Naive thymus-derived CD4-positive, alpha-beta T cell (primary cell): ENCODE measurements at regions of chr3 and their contacts with region 1.

Region 1: DNA sequence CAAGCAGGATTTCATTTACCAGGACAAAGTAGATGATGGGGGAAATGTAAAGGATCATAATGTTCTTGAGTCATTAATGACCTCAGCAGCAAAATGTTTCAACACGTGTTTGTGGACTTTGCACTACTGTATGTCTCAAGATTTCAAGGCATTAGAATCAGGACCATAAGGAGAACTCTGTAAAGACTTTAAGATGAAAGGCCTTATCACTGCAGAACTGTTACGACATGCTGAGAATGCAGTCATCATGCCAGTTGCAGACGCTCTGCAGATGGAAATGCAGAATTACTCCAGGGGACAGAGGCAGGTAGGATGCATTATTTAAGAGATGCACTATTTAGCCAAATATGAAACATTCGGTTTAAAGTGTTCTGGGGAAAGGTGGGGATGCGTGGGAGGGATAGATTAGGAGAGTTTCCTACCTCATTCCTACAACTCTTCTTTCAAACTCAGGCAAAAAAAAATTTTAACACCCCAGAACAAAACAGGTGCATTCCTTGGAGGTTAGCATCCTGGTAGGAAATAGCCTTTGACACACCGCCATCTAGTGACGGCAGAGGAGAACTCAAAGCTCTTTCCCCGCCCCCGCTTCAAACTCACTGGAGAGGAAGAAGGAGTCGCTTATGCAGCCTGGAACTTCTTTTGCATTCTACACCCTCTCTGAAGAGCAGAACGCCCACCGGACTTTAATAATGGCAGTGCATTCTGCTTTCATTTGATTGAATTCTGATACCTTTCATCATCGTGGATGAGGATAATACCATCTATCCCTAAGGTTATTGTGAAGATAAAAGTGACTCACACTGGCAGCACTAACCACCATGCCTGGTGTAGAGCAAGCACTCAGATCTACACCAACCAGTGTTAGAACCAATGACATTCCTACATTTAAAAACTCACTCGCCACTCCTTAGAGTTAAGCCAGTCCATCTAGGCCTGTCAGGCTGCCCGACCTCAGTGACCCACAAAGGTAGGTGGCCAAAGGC is 43.1 kb upstream of the TOPAZ1 start:
- DNase-seq: peak; percentile 23 to 68 (median 62)
- ATAC-seq: peak; percentile 83
- H3K4me3 ChIP-seq: no peak overlapping the region
- H3K4me3 Mint-ChIP-seq: no peak overlapping the region
- H3K27ac ChIP-seq: no peak overlapping the region
- H3K27ac Mint-ChIP-seq: no peak overlapping the region
- H3K4me1 ChIP-seq: no peaks in the 10 kb centered on the region
- H3K4me1 Mint-ChIP-seq: no peaks in the 10 kb centered on the region
- H3K27me3 ChIP-seq: no peaks in the 10 kb centered on the region
- H3K27me3 Mint-ChIP-seq: peaks cover 16 to 25% (median 18%) of the 10 kb centered on the region in 5 donors

Region 2: DNA sequence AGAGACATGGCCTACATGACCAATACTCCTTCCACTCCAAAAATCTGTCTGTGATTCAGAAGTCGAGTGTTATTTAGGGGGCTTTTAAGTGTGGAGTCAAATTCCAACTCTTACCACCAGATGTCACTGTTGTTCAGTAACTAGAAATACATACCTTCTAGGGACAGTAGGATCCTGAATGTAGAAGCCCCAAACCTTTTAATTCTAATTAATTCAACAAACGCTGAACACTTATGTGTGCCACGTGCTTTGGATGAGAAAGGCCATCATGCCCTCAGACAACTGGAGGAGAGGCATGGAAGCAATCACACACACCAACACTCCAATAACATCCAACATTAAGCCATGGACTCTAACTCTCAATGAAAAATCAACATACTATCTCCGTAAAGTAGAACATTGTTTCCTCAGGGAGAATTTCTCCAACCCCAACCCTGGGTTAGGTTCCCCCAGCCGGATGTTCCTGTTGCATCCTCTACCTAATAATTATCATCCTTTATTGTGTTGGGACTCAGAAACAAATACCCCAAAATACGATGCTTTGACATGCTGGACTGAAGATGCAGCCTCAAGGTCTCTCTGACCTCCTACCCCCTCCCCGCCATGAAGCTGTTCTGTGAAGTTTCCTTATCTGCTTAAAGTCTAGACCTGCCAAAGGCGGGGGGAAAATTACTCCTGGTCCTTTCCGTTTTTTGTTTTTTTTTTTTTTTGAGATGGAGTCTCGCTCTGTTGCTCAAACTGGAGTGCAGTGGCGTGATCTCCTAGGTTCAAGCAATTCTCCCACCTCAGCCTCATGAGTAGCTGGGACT is 1417.5 kb before region 1 on chr3:
- CTCF ChIA-PET with region 1: no interaction called
- POLR2A ChIA-PET with region 1: no interaction called
- intact Hi-C with region 1: loop called in 1 of 2 experiments (anchors 2 kb)
- DNase-seq: peak in 7 of 9 donors; percentile 41 to 67 (median 54)
- ATAC-seq: peak; percentile 87
- H3K4me3 ChIP-seq: no peak overlapping the region
- H3K4me3 Mint-ChIP-seq: no peak overlapping the region
- H3K27ac ChIP-seq: no peak overlapping the region
- H3K27ac Mint-ChIP-seq: peak overlapping the region in 2 of 9 donors; percentile 14
- H3K4me1 ChIP-seq: no peaks in the 10 kb centered on the region
- H3K4me1 Mint-ChIP-seq: peaks cover 0 to 5% (median 0%) of the 10 kb centered on the region in 7 donors
- H3K27me3 ChIP-seq: no peaks in the 10 kb centered on the region
- H3K27me3 Mint-ChIP-seq: no peaks in the 10 kb centered on the region

Region 3: DNA sequence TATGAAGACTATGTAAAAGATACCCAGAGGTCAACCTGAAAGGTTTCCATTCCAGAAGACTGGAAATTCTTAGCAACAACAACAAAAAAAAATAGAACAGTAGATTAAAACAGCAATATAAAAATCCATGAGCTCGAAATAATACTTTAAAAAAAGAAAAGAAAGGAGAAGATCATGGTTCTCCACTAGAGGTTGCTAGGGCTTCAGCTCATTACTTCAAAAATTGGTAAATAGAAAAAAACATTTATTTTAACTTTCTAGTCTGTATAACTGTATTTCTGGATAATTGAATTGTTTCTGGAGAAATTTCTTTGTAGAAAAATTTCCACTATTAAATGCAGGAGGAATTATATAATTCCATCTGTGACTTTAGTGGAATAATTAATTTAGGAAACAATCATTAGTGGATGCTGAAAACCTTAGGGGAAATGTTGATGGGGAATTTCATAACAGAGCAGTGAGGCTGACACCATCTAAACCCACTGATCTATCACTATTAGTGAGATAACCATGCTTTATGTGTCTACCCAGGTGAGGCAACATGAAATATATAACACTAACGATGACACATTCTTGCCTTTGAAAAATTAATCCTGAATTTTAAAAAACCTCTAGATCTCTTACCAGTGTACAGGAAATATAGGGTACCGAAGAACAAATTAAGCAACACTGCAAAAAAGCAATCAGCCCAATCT is 974.8 kb before region 1 on chr3:
- CTCF ChIA-PET with region 1: no interaction called
- POLR2A ChIA-PET with region 1: no interaction called
- intact Hi-C with region 1: loop called in 1 of 2 experiments (anchors 5 kb)
- DNase-seq: peak in 4 of 9 donors; percentile 18 to 46 (median 38)
- ATAC-seq: peak; percentile 57
- H3K4me3 ChIP-seq: no peak overlapping the region
- H3K4me3 Mint-ChIP-seq: peak overlapping the region in 6 of 10 donors; percentile 20 to 77 (median 47)
- H3K27ac ChIP-seq: no peak overlapping the region
- H3K27ac Mint-ChIP-seq: peak overlapping the region in 7 of 9 donors; percentile 18 to 93 (median 87)
- H3K4me1 ChIP-seq: peaks cover 13 to 56% of the 10 kb centered on the region in 2 donors
- H3K4me1 Mint-ChIP-seq: peaks cover 25 to 67% (median 63%) of the 10 kb centered on the region in 7 donors
- H3K27me3 ChIP-seq: no peaks in the 10 kb centered on the region
- H3K27me3 Mint-ChIP-seq: no peaks in the 10 kb centered on the region

Region 4: GRCh38 chr3:43769471-43770425 is 428.8 kb before region 1 on chr3:
- CTCF ChIA-PET with region 1: interaction called, 3 read pairs
- POLR2A ChIA-PET with region 1: no interaction called
- intact Hi-C with region 1: loop called (anchors 1 kb)
- DNase-seq: peak; percentile 48 to 76 (median 68)
- ATAC-seq: peak; percentile 75
- H3K4me3 ChIP-seq: no peak overlapping the region
- H3K4me3 Mint-ChIP-seq: peak overlapping the region in 9 of 10 donors; percentile 0 to 66 (median 35)
- H3K27ac ChIP-seq: no peak overlapping the region
- H3K27ac Mint-ChIP-seq: peak overlapping the region in 2 of 9 donors; percentile 15 to 17
- H3K4me1 ChIP-seq: peaks cover 14 to 20% of the 10 kb centered on the region in 2 donors
- H3K4me1 Mint-ChIP-seq: peaks cover 5 to 20% (median 10%) of the 10 kb centered on the region in 7 donors
- H3K27me3 ChIP-seq: no peaks in the 10 kb centered on the region
- H3K27me3 Mint-ChIP-seq: peaks cover 0 to 21% (median 0%) of the 10 kb centered on the region in 5 donors

Region 5: GRCh38 chr3:43919029-43919428 is 279.5 kb before region 1 on chr3:
- CTCF ChIA-PET with region 1: no interaction called
- POLR2A ChIA-PET with region 1: no interaction called
- intact Hi-C with region 1: no loop called
- DNase-seq: no peak
- ATAC-seq: no peak
- H3K4me3 ChIP-seq: no peak overlapping the region
- H3K4me3 Mint-ChIP-seq: no peak overlapping the region
- H3K27ac ChIP-seq: no peak overlapping the region
- H3K27ac Mint-ChIP-seq: no peak overlapping the region
- H3K4me1 ChIP-seq: no peaks in the 10 kb centered on the region
- H3K4me1 Mint-ChIP-seq: peaks cover 0 to 5% (median 0%) of the 10 kb centered on the region in 7 donors
- H3K27me3 ChIP-seq: no peaks in the 10 kb centered on the region
- H3K27me3 Mint-ChIP-seq: peaks cover 28 to 49% (median 43%) of the 10 kb centered on the region in 5 donors

Region 6: DNA sequence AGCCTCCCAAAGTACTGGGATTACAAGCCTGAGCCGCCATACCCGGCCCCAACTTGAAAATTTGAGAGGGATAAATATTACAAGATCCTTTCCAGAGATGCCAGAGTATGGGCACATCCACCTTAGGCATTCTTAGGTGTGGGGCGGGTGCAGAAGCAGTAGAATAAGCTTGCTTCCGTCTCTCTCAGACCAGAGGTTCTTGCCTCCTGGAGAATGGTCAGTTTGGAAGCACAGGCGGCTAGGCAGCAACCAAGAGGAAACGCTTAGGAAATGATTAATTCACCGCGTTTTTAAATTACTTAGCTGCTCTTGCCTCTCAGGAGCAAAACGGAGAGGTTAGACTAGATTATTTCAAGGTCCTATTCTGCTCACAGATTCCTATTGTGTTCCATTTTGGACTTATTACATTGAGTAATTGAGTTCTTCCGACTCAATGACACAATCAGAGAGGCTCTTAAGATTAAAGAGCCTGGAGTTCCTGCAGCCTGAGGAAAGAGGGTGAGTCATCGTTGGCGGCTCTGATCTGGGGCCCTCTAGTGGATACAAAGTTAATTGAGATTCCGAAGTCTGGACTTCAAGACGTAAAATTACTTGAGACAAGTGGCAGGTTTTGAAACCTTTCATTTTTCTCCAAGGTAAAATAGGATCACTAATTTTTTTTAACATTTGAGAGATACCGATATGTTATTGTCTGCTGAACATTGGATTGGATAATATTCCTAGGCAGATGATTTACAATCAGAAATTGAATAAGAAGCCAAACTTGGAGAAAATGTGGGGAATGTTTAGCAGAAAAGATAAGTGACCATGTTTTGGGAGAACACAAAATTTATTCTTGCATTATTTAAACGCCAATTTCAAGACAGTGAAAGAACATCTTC is 37.3 kb after region 1 on chr3:
- CTCF ChIA-PET with region 1: interaction called, 4 read pairs
- POLR2A ChIA-PET with region 1: no interaction called
- intact Hi-C with region 1: loop called in 1 of 2 experiments (anchors 1 kb)
- DNase-seq: peak in 8 of 9 donors; percentile 36 to 71 (median 64)
- ATAC-seq: peak; percentile 96
- H3K4me3 ChIP-seq: no peak overlapping the region
- H3K4me3 Mint-ChIP-seq: peak overlapping the region in 2 of 10 donors; percentile 5 to 23
- H3K27ac ChIP-seq: no peak overlapping the region
- H3K27ac Mint-ChIP-seq: no peak overlapping the region
- H3K4me1 ChIP-seq: no peaks in the 10 kb centered on the region
- H3K4me1 Mint-ChIP-seq: peaks cover 4 to 16% (median 12%) of the 10 kb centered on the region in 7 donors
- H3K27me3 ChIP-seq: no peaks in the 10 kb centered on the region
- H3K27me3 Mint-ChIP-seq: peaks cover 8 to 18% (median 9%) of the 10 kb centered on the region in 5 donors